ENCODE measurements at regions of chr1 and their contacts with region 1.

Region 1: DNA sequence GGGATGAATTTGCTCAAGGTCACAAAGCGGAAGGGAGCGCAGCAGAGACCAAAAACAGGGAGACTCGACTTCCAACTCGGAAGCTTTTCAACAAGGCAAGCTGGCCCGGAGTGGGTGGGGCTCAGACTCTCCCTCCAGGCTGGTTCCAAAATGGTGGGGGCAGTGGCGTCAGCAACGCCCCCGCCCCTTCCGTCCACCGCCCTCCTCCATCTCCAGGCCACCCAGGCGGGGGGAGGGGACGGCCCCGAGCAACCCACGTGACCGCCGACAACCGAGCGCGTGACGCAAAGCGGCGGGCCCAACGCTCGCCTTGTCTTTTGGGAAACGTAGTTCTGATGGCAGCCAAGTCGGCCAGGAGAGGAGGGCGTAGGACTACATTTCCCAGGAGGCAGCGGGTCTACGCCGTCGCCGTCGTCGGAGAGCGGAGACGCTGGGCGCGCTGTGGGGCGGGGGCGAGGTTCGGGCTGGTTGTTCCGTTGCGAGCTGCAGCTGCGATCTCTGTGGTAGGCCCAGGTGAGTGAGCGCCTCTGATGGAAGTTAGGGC is at the start of gene THRAP3:
- DNase-seq: peak; percentile 99 to 100
- H3K4me3 ChIP-seq: peak within 1 kb of the TSS; percentile 81 to 87
- H3K27ac ChIP-seq: peak within 1 kb of the TSS; percentile 97 to 98
- H3K4me1 ChIP-seq: peaks cover 0 to 49% (median 39%) of the 10 kb centered on the region in 4 donors
- H3K27me3 ChIP-seq: no peaks in the 10 kb centered on the region
- CTCF ChIP-seq: no peak

Region 2: GRCh38 chr1:36149237-36149972 is 74.7 kb before region 1 on chr1 and contains the start of gene TRAPPC3:
- intact Hi-C with region 1: loop called (anchors 2 kb)
- DNase-seq: peak; percentile 100
- H3K4me3 ChIP-seq: peak within 1 kb of the TSS; percentile 84 to 93
- H3K27ac ChIP-seq: peak within 1 kb of the TSS; percentile 89 to 100
- H3K4me1 ChIP-seq: peaks cover 0 to 61% (median 34%) of the 10 kb centered on the region in 4 donors
- H3K27me3 ChIP-seq: no peaks in the 10 kb centered on the region
- CTCF ChIP-seq: peak; percentile 88 to 98

Region 3: DNA sequence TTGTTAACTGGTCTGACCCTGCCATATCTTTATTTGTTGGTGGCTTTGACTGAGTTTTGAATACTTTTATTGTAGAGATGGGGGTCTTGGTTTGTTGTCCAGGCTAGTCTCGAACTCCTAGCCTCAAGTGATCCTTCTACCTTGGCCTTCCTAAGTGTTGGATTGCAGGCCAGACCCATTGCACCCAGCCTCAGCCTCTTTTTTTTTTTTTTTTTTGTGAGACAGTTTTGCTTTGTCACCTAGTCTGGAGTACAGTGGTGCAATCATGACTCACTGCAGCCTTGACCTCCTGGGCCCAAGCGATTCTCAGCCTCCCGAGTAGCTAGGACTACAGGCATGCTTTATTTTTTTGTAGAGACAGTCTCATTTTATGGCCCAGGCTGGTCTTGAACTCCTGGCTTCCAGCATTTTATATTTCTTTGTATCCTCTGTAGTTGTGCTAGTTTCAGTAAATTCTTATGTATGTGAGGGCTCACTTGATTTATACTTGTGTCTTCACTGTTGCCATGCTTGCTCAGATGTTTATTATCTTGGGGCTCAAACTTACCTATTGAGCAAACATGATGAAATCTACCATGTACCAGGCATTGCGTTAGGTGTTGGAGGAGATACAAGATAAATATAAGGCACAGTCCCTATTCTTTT is 24.3 kb after region 1 on chr1:
- intact Hi-C with region 1: loop called (anchors 2 kb)
- DNase-seq: peak; percentile 81 to 90
- H3K4me3 ChIP-seq: no peak overlapping the region
- H3K27ac ChIP-seq: peak overlapping the region; percentile 75 to 81
- H3K4me1 ChIP-seq: peaks cover 0 to 98% (median 42%) of the 10 kb centered on the region in 4 donors
- H3K27me3 ChIP-seq: no peaks in the 10 kb centered on the region
- CTCF ChIP-seq: no peak